Tibial artery (tissue), 4 donors: ENCODE measurements at regions of chr2 and their contacts with region 1.

Region 1: DNA sequence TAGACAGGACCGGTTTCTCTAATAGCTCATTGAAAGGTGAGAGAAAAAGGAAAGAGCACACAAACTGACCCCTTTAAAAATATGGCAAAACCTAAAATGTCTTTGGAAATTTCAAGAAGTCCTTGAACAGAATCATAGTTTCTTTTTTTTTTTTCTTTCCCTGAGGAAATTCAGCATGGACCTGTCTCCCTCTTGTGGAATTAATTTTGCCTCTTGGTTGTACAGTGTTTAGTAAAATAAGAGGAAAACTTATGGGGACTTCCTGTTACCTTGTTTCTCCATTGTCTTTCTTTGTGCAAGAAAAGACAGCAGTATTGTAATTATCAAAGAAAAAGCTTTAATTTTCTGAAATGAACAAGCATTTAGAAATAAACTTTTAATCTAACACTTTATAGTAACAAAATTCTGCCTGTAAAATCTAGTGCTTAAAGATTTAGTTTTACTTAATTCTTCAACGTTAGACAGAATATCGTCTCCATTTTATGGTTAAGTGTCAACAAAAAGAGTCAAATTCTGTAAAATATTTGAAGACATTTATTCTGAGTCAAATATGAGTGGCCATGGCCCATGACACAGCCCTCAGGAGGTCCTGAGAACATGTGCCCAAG is 176.3 kb upstream of the NABP1 start:
- DNase-seq: no peak
- H3K4me3 ChIP-seq: no peak overlapping the region
- H3K27ac ChIP-seq: no peak overlapping the region
- H3K4me1 ChIP-seq: peaks cover 0 to 21% (median 14%) of the 10 kb centered on the region in 4 donors
- H3K27me3 ChIP-seq: no peaks in the 10 kb centered on the region
- CTCF ChIP-seq: peak; percentile 74

Region 2: DNA sequence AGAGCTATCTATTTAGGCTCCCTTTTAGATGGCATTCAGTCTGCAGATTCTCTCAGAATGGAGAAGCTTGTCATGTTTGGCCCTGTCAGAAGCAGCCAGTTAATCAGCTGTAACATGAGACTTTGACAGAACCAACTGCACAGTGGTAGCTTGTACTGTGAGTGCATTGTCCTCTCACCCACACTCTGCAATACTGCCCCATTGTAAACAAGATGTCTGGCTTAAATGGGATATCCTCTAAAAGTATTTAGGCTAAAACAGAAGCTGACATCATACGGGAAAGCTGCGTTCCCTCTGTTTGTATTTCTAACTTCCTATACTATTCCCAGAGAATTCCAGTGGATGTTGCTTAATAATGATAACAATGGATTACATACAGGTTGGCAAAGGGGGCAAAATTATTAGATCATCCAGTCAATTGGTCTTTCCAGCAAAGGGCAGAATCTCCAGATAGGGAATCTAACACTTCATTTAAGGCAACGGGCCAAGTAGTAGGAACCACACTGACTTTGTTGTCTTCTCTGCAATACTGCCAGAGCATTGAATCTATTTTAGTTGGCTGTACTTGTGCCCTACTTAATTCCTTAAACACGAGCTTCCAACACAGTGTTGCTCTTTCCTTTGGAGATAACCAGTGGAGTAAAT is 335.4 kb before region 1 on chr2:
- intact Hi-C with region 1: loop called (anchors 2 kb)
- DNase-seq: no peak
- H3K4me3 ChIP-seq: no peak overlapping the region
- H3K27ac ChIP-seq: no peak overlapping the region
- H3K4me1 ChIP-seq: peaks cover 0 to 33% (median 25%) of the 10 kb centered on the region in 4 donors
- H3K27me3 ChIP-seq: no peaks in the 10 kb centered on the region
- CTCF ChIP-seq: no peak

Region 3: GRCh38 chr2:191218292-191218898 is 283.3 kb before region 1 on chr2:
- intact Hi-C with region 1: loop called (anchors 2 kb)
- DNase-seq: no peak
- H3K4me3 ChIP-seq: no peak overlapping the region
- H3K27ac ChIP-seq: no peak overlapping the region
- H3K4me1 ChIP-seq: peaks cover 0 to 14% (median 6%) of the 10 kb centered on the region in 4 donors
- H3K27me3 ChIP-seq: no peaks in the 10 kb centered on the region
- CTCF ChIP-seq: peak; percentile 51 to 62

Region 4: DNA sequence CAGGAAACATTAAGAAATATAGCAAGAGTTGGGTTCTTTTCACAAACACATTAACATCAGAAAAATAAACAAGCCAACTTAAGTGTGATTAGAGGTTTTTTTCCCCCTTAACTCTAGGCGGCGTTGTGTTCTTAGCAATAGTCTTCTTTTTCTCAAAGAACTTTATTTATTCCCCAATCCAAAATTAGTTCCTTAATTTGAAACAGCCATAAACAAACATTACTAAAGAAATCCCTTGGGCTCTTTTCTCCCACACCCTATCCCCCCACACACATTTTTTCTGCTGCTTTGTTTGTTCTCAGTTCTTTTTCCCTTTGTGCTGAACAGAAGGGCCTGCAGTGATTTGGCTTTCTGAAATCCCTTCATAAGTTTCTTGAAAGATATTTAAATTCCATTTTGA is 269.7 kb before region 1 on chr2:
- intact Hi-C with region 1: loop called (anchors 5 kb)
- DNase-seq: no peak
- H3K4me3 ChIP-seq: no peak overlapping the region
- H3K27ac ChIP-seq: no peak overlapping the region
- H3K4me1 ChIP-seq: peaks cover 0 to 4% (median 2%) of the 10 kb centered on the region in 4 donors
- H3K27me3 ChIP-seq: no peaks in the 10 kb centered on the region
- CTCF ChIP-seq: peak; percentile 41 to 51

Region 5: DNA sequence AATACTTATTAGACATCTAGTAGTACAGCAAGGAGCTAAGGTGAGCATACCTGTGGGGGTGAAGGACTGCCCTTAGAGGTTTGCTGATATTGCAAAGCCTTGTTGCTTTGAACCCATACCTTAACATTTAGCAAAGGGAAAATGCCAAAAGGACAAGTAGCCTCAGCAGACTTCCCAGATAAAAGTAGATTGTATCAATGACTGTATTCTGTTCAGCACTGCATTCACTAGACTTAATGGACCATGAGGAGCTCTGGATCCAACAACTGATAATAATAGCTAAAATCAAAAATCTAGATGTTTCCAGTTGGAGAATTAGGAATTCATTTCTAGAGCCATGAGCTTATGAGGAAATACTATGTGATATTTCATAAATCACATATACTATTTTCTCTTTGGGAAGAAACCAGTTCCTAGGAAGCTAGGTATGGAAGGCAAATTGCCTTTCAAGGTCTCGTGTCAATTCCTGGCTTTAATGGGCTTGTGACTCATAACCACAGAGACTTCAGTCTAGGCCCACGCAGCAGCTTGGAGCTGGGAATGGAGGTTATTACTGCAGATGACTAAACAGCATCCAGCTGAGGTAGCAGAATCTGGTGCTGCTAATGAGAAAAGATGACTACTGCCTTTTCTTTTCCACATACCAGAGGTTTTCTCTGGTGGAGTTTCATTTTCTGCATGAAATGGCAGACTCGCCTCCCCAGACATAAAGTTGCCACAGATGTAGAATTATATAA is 14.9 kb before region 1 on chr2:
- intact Hi-C with region 1: no loop called
- DNase-seq: no peak
- H3K4me3 ChIP-seq: no peak overlapping the region
- H3K27ac ChIP-seq: no peak overlapping the region
- H3K4me1 ChIP-seq: no peaks in the 10 kb centered on the region
- H3K27me3 ChIP-seq: no peaks in the 10 kb centered on the region
- CTCF ChIP-seq: no peak

Region 6: GRCh38 chr2:191797960-191798876 is 296.6 kb after region 1 on chr2:
- intact Hi-C with region 1: no loop called
- DNase-seq: no peak
- H3K4me3 ChIP-seq: no peak overlapping the region
- H3K27ac ChIP-seq: no peak overlapping the region
- H3K4me1 ChIP-seq: no peaks in the 10 kb centered on the region
- H3K27me3 ChIP-seq: no peaks in the 10 kb centered on the region
- CTCF ChIP-seq: no peak